K562 (cell line): ENCODE measurements at regions of chr3 and their contacts with region 1.

Region 1: GRCh38 chr3:42581709-42582473 is at the start of gene SEC22C:
- DNase-seq: peak; percentile 99 to 100 (median 100)
- ATAC-seq: peak; percentile 95
- H3K4me3 ChIP-seq: peak within 1 kb of the TSS; percentile 65
- H3K27ac ChIP-seq: peak within 1 kb of the TSS; percentile 79
- H3K4me1 ChIP-seq: peaks cover 12 to 16% of the 10 kb centered on the region in 2 experiments; a peak in 3 of 5 replicates
- H3K27me3 ChIP-seq: no peaks in the 10 kb centered on the region
- CTCF ChIP-seq: peak; percentile 73 to 89 (median 88)
- EP300 ChIP-seq: peak; percentile 68; the same call in 1 of the 2 replicates
- POLR2A ChIP-seq: peak; percentile 96
- RAD21 ChIP-seq: peak; percentile 89 to 92
- polyA plus RNA-seq, gene SEC22C: 35.6 to 41.3 TPM

Region 2: GRCh38 chr3:42562047-42562907 is 19.6 kb before region 1 on chr3:
- CTCF ChIA-PET with region 1: no interaction called
- POLR2A ChIA-PET with region 1: no interaction called
- in situ Hi-C with region 1: no loop called
- intact Hi-C with region 1: no loop called
- DNase-seq: peak in 2 of 4 experiments; percentile 36 to 39
- ATAC-seq: peak; percentile 50
- H3K4me3 ChIP-seq: no peak overlapping the region
- H3K27ac ChIP-seq: no peak overlapping the region
- H3K4me1 ChIP-seq: no peaks in the 10 kb centered on the region; a peak in 2 of 5 replicates
- H3K27me3 ChIP-seq: no peaks in the 10 kb centered on the region
- CTCF ChIP-seq: 0 out of 6 replicates have a peak, but pooled peaks of 1 of the 3 experiments have one; percentile 17
- EP300 ChIP-seq: no peak
- POLR2A ChIP-seq: no peak
- RAD21 ChIP-seq: 0 out of 4 replicates have a peak, but pooled peaks of 1 of the 2 experiments have one; percentile 7

Region 3: DNA sequence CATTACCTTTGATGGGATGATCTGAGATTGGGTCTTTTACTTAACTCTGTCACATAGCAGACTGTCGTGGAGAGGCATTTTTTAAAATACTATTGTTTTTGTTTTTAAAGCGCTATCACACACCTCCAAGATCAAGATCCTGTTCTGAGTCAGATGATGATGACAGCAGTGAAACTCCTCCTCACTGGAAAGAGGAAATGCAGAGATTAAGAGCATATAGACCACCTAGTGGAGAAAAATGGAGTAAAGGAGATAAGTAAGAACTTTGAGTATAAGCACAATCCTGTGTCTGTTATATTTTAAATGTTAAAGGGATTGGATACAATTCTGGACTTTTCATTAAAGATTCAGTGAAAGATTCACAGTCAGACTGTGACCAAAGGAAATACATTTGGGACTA is 53.2 kb after region 1 on chr3:
- CTCF ChIA-PET with region 1: no interaction called
- POLR2A ChIA-PET with region 1: no interaction called
- in situ Hi-C with region 1: no loop called
- intact Hi-C with region 1: loop called (anchors 1 kb)
- DNase-seq: peak in 3 of 4 experiments; percentile 41 to 58 (median 58)
- ATAC-seq: peak; percentile 88
- H3K4me3 ChIP-seq: no peak overlapping the region
- H3K27ac ChIP-seq: no peak overlapping the region
- H3K4me1 ChIP-seq: no peaks in the 10 kb centered on the region; a peak in 1 of 5 replicates
- H3K27me3 ChIP-seq: no peaks in the 10 kb centered on the region
- CTCF ChIP-seq: peak; percentile 33 to 69 (median 42); a peak in 4 of 6 replicates
- EP300 ChIP-seq: peak; percentile 52
- POLR2A ChIP-seq: no peak
- RAD21 ChIP-seq: peak; percentile 56 to 74

Region 4: DNA sequence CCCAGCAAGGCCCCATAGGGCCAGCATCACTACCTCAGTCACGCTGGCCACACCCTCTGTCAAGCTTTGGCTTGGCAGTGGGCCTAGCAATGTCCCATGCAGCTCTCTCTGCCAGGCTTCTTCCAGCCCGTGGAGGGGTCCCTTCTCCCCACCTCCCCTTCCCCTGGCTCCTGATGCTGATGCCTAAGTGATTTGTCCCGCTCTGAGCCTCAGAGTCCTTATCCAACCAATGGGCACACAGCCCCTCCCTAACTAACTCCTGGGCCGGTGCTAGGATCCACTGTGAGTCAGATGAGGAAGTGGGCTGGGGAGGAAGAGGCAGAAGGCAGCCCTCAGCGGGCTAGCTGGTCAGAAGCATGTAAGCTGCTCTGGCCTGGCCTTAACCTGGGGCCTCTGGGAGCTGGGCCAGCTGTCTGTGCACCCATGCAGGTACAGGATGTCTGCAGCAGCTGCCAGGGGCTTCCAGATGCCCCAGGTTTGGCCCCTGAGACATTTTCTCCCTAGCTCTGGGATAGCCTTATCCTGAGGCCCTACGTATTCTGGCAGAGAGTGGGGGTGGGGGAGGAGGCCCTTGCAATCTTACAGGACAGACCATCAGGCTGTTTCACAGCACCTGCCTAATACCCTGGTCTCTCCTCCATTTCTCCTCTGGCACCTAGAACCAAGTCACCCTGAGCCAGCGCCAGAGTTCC is 70.9 kb after region 1 on chr3:
- CTCF ChIA-PET with region 1: no interaction called
- POLR2A ChIA-PET with region 1: interaction called, 5 read pairs
- in situ Hi-C with region 1: no loop called
- intact Hi-C with region 1: loop called (anchors 5 kb)
- DNase-seq: peak; percentile 60 to 86 (median 70)
- ATAC-seq: peak; percentile 75
- H3K4me3 ChIP-seq: peak overlapping the region; percentile 6; the same call in 1 of the 2 replicates
- H3K27ac ChIP-seq: peak overlapping the region; percentile 37; the same call in 2 of the 3 replicates
- H3K4me1 ChIP-seq: peaks cover 16 to 43% of the 10 kb centered on the region in 2 experiments
- H3K27me3 ChIP-seq: no peaks in the 10 kb centered on the region
- CTCF ChIP-seq: no peak
- EP300 ChIP-seq: no peak
- POLR2A ChIP-seq: peak; percentile 75
- RAD21 ChIP-seq: peak in 1 of 2 experiments; percentile 12; a peak in 1 of 4 replicates

Region 5: GRCh38 chr3:42749753-42750231 is 167.9 kb after region 1 on chr3:
- CTCF ChIA-PET with region 1: no interaction called
- POLR2A ChIA-PET with region 1: interaction called, 3 read pairs
- in situ Hi-C with region 1: loop called (anchors 10 kb)
- intact Hi-C with region 1: loop called (anchors 1 kb)
- DNase-seq: peak; percentile 58 to 72 (median 62)
- ATAC-seq: peak; percentile 90
- H3K4me3 ChIP-seq: no peak overlapping the region
- H3K27ac ChIP-seq: no peak overlapping the region
- H3K4me1 ChIP-seq: no peaks in the 10 kb centered on the region; a peak in 1 of 5 replicates
- H3K27me3 ChIP-seq: peaks cover 8 to 56% of the 10 kb centered on the region in 2 experiments; a peak in 4 of 5 replicates
- CTCF ChIP-seq: peak; percentile 84 to 90 (median 88)
- EP300 ChIP-seq: no peak
- POLR2A ChIP-seq: no peak
- RAD21 ChIP-seq: peak; percentile 61 to 79